ENCODE measurements at regions of chr15 and their contacts with region 1.

Region 1: DNA sequence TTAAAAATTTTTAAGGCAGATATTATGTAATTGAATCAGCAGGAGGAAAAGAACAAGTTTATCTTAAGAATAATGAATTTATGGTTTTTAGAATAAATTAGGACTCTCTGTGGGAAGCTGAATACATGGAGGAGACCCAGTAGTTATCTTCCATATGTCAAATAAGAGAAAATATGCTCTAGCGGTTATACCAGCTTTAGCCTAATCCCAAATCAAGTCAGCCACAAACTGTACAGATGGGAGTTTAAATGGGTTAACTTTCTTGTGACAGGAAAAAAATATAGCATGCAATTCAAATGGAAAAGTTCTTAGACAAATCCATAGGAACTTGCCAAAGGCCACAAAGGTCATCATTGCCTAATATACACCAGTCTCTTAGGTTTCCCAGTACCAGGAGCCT is 84.3 kb downstream of the TTBK2 start:
- DNase-seq: no peak
- H3K27ac ChIP-seq: no peak overlapping the region
- CTCF ChIP-seq: no peak

Region 2: GRCh38 chr15:42736793-42737528 is 99.3 kb before region 1 on chr15 and contains the start of gene CDAN1:
- CTCF ChIA-PET with region 1: interaction called, 10 read pairs
- POLR2A ChIA-PET with region 1: no interaction called
- DNase-seq: peak; percentile 99
- H3K27ac ChIP-seq: peak within 1 kb of the TSS; percentile 81
- CTCF ChIP-seq: no peak

Measured in RWPE1 (cell line).